ENCODE measurements at regions of chrX and their contacts with region 1.

Region 1: GRCh38 chrX:8743126-8743732 is 11.3 kb upstream of the ANOS1 start:
- DNase-seq: peak; percentile 35
- H3K4me3 ChIP-seq: no peak overlapping the region
- H3K27ac ChIP-seq: no peak overlapping the region
- H3K4me1 ChIP-seq: no peaks in the 10 kb centered on the region
- H3K27me3 ChIP-seq: no peaks in the 10 kb centered on the region
- CTCF ChIP-seq: peak; percentile 73 to 80

Region 2: DNA sequence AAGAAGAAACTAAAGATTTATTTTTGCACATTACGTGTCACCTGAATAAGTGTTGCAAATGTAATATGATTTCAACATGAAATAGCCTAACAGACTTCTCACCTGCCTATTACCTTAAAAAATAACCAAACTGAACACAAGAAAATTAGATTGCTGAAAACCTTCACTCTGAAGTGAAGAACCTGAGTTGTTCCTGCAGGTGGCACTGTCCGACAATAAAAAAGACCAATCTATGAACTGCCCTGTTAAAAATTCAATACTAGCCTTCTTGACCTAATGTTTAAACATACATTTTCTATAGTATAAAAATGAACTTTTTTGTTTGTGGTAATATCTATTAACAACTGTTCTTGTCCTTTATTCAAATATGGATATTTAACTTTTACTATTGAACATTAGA is 746.8 kb before region 1 on chrX:
- CTCF ChIA-PET with region 1: no interaction called
- dilution Hi-C with region 1: no loop called
- in situ Hi-C with region 1: loop called (anchors 10 to 25 kb)
- intact Hi-C with region 1: loop called (anchors 1 kb)
- DNase-seq: peak; percentile 19
- H3K4me3 ChIP-seq: no peak overlapping the region
- H3K27ac ChIP-seq: no peak overlapping the region
- H3K4me1 ChIP-seq: no peaks in the 10 kb centered on the region
- H3K27me3 ChIP-seq: no peaks in the 10 kb centered on the region
- CTCF ChIP-seq: peak; percentile 60 to 62

Region 3: DNA sequence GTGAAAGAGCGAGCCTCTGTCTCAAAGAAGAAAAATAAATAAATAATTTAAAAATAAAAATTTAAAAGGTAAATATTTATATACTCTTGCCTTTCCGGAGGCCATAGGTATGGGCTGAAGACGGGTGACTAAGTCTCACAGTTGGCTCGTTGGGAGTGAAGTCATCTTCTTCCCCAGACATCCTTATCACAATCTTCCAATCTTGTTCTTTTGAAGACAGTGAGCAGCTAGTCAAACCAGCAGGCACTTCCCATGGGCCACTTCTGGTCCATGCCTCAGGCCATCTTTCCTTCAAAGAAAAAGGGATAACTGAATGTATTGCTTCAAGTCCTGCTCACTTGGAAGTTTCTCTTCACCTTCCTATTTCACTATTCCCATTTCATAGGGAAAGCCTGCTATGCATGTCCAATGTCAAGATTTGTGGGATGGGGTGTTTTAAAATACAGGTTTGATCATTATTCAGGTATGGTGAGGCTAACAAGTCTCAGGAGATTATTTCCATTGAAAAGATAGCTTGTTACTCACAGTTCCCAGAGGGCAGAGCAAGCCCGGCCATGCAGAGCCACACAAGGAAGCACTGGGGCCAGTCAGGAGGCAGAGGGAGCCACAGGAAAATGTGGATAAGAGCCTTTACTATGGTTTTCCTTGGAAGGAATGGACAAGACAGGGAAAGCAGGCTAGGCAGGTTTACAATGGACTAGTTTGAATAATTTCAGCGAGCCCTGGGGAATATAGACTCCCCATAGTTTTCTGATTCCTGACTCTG is 538.9 kb before region 1 on chrX:
- CTCF ChIA-PET with region 1: no interaction called
- dilution Hi-C with region 1: no loop called
- in situ Hi-C with region 1: no loop called
- intact Hi-C with region 1: no loop called
- DNase-seq: peak; percentile 6
- H3K4me3 ChIP-seq: no peak overlapping the region
- H3K27ac ChIP-seq: no peak overlapping the region
- H3K4me1 ChIP-seq: no peaks in the 10 kb centered on the region
- H3K27me3 ChIP-seq: no peaks in the 10 kb centered on the region
- CTCF ChIP-seq: no peak

Region 4: DNA sequence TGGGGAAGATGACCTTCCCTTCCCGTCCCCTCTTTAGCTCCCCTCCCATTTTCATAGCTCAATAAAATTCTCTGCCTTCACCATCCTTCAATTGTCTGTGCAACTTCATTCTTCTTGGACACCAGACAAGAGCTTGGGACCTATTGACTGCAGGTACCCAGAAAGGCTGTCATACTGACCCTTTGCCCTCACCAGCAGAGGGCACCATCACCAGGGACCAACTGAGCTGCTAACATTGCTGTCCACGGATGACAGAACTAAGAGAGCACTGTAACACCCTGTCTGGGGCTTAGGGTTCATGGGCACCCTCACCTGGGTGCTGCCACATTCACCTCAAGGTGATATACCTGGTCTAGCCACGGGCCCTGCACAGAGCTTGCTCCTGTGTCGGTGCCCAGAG is 419.9 kb before region 1 on chrX:
- CTCF ChIA-PET with region 1: no interaction called
- dilution Hi-C with region 1: no loop called
- in situ Hi-C with region 1: no loop called
- intact Hi-C with region 1: loop called (anchors 2 kb)
- DNase-seq: no peak
- H3K4me3 ChIP-seq: no peak overlapping the region
- H3K27ac ChIP-seq: no peak overlapping the region
- H3K4me1 ChIP-seq: no peaks in the 10 kb centered on the region
- H3K27me3 ChIP-seq: no peaks in the 10 kb centered on the region
- CTCF ChIP-seq: peak; percentile 19 to 52

Region 5: GRCh38 chrX:8879750-8880149 is 136.5 kb after region 1 on chrX:
- CTCF ChIA-PET with region 1: no interaction called
- dilution Hi-C with region 1: no loop called
- in situ Hi-C with region 1: no loop called
- intact Hi-C with region 1: loop called (anchors 1 kb)
- DNase-seq: peak; percentile 4
- H3K4me3 ChIP-seq: no peak overlapping the region
- H3K27ac ChIP-seq: no peak overlapping the region
- H3K4me1 ChIP-seq: no peaks in the 10 kb centered on the region
- H3K27me3 ChIP-seq: no peaks in the 10 kb centered on the region
- CTCF ChIP-seq: peak; percentile 66 to 74

Region 6: DNA sequence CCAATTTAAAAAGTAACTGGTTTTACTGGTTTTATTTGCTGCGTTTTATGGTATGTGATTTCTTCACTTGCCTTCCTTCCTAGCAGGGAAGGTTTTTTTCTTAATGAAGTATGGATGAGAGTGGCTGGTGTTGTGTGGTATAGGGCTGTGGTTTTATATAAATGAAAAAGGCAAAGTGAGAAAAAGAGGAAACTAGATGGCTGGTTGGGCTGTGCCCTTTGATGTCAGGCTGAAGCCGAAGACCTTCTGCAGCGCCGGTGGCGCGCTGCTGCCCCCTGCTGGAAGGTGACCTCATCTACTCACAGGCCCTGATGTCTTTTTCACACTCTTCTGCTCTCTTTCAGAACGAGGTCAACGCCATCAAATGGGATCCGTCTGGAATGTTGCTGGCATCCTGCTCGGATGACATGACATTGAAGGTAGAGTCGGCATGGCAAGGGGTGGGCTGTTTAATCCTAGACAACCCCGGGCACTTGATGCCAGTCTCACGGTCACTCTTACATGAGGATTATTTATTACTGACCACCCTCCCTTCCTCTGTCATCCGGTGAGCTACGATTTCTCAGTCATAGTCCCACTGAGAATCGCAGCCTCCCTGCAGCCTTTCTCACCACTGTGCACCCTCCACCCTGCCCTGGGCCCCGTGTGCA is 965.8 kb after region 1 on chrX:
- CTCF ChIA-PET with region 1: no interaction called
- dilution Hi-C with region 1: no loop called
- in situ Hi-C with region 1: no loop called
- intact Hi-C with region 1: loop called (anchors 5 kb)
- DNase-seq: peak; percentile 20
- H3K4me3 ChIP-seq: no peak overlapping the region
- H3K27ac ChIP-seq: no peak overlapping the region
- H3K4me1 ChIP-seq: no peaks in the 10 kb centered on the region
- H3K27me3 ChIP-seq: no peaks in the 10 kb centered on the region
- CTCF ChIP-seq: peak; percentile 64 to 77

Measured in mammary epithelial cell (primary cell).